ENCODE measurements at regions of chr3 and their contacts with region 1.

Region 1: GRCh38 chr3:143775459-143775858 is 72.8 kb downstream of the SLC9A9 start:
- DNase-seq: no peak
- H3K4me3 ChIP-seq: peak overlapping the region in 1 of 2 donors; percentile 33
- H3K27ac ChIP-seq: no peak overlapping the region
- H3K4me1 ChIP-seq: peaks cover 0 to 2% of the 10 kb centered on the region in 2 donors
- H3K27me3 ChIP-seq: no peaks in the 10 kb centered on the region
- CTCF ChIP-seq: peak in 2 of 3 experiments; percentile 31 to 62

Region 2: GRCh38 chr3:143951351-143951971 is 176.0 kb after region 1 on chr3:
- intact Hi-C with region 1: loop called (anchors 2 kb)
- DNase-seq: no peak
- H3K4me3 ChIP-seq: no peak overlapping the region
- H3K27ac ChIP-seq: no peak overlapping the region
- H3K4me1 ChIP-seq: no peaks in the 10 kb centered on the region
- H3K27me3 ChIP-seq: no peaks in the 10 kb centered on the region
- CTCF ChIP-seq: peak; percentile 24 to 57 (median 54)